GM12878 (cell line): ENCODE measurements at regions of chr7 and their contacts with region 1.

Region 1: DNA sequence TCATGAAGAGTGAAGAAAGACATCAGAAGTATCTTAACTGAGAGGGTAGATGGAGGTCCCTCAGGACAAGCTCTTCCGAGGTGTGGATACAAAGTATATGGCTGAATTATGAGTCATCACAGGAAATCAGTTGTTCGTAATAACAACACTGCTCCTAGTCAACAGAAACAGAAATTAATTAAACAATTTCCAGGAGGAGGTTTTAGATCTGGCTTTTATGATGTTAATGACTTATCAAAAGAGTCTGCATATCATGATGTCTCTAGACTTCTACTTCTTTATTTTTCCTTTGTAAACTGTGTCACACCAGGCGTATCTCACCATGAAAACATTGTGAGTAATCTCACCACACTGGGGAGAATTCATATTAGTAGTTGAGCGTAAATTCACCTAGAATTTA is 31.2 kb downstream of the OSBPL3 start:
- DNase-seq: no peak
- ATAC-seq: peak; percentile 47
- H3K4me3 ChIP-seq: no peak overlapping the region
- H3K27ac ChIP-seq: peak overlapping the region; percentile 7; the same call in 1 of the 2 replicates
- H3K4me1 ChIP-seq: peaks cover 12% of the 10 kb centered on the region; the same call in 1 of the 2 replicates
- H3K27me3 ChIP-seq: no peaks in the 10 kb centered on the region
- CTCF ChIP-seq: no peak
- EP300 ChIP-seq: no peak
- POLR2A ChIP-seq: no peak
- RAD21 ChIP-seq: no peak

Region 2: GRCh38 chr7:24896031-24896501 is 52.7 kb before region 1 on chr7:
- CTCF ChIA-PET with region 1: no interaction called
- POLR2A ChIA-PET with region 1: interaction called, 3 read pairs
- RAD21 ChIA-PET with region 1: no interaction called
- SMC1A ChIA-PET with region 1: interaction called, 12 read pairs
- in situ Hi-C with region 1: no loop called
- intact Hi-C with region 1: no loop called
- DNase-seq: peak; percentile 52
- ATAC-seq: peak; percentile 70
- H3K4me3 ChIP-seq: no peak overlapping the region
- H3K27ac ChIP-seq: peak overlapping the region; percentile 75
- H3K4me1 ChIP-seq: peaks cover 57% of the 10 kb centered on the region
- H3K27me3 ChIP-seq: no peaks in the 10 kb centered on the region
- CTCF ChIP-seq: peak in 1 of 3 experiments; percentile 45; a peak in 2 of 6 replicates
- EP300 ChIP-seq: peak; percentile 55 to 79; a peak in 3 of 4 replicates
- POLR2A ChIP-seq: no peak
- RAD21 ChIP-seq: peak; percentile 40; the same call in 1 of the 2 replicates

Region 3: DNA sequence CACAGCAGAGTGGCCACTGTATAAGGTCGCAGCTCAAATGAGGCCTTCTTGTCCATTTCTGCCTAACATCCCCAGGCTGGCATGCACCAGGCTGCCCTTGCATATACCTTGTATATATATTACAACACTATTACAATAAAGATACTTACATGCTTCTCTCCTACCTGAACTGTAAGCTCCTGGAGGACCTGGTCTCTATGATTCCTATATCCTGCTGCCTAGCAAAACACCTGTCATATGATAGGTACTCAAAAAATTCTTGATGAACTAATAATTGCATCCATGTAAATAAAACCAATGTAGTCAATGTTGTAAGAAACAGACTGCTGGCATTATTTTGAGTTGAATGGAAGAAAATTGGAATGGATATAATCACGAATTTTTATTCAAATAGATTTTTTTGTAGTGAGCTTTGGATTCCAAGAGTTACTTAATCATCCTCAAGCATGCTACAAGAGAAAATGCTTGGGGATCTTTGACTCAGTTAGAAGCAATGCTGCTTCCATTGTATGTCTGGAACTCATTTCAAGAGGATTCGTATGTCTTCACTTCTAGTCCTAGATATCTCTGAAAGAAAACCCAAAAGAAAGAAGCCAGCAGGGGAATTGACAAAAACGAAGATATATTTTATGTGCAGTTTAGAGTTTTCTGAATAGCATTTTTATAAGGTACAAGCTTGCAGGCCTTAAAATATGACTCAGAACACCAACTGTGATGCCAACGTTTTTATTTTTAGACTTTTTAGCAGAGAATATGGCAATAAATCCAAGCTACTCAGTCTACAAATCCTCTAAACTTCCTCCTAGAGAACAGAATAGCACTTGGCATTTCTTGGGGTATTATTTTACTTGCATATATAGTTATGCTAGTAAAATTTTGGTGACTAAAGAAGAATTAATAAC is 21.9 kb before region 1 on chr7:
- CTCF ChIA-PET with region 1: interaction called, 4 read pairs
- POLR2A ChIA-PET with region 1: interaction called, 5 read pairs
- RAD21 ChIA-PET with region 1: interaction called, 5 read pairs
- SMC1A ChIA-PET with region 1: interaction called, 26 read pairs
- in situ Hi-C with region 1: no loop called
- intact Hi-C with region 1: no loop called
- DNase-seq: no peak
- ATAC-seq: no peak
- H3K4me3 ChIP-seq: no peak overlapping the region
- H3K27ac ChIP-seq: no peak overlapping the region
- H3K4me1 ChIP-seq: peaks cover 4% of the 10 kb centered on the region
- H3K27me3 ChIP-seq: no peaks in the 10 kb centered on the region
- CTCF ChIP-seq: no peak
- EP300 ChIP-seq: no peak
- POLR2A ChIP-seq: no peak
- RAD21 ChIP-seq: no peak

Region 4: GRCh38 chr7:24936121-24936824 is 12.5 kb before region 1 on chr7:
- CTCF ChIA-PET with region 1: interaction called, 7 read pairs
- POLR2A ChIA-PET with region 1: interaction called, 7 read pairs
- RAD21 ChIA-PET with region 1: interaction called, 4 read pairs
- SMC1A ChIA-PET with region 1: interaction called, 31 read pairs
- in situ Hi-C with region 1: no loop called
- intact Hi-C with region 1: no loop called
- DNase-seq: peak; percentile 34
- ATAC-seq: peak; percentile 76
- H3K4me3 ChIP-seq: peak overlapping the region; percentile 52; the same call in 1 of the 2 replicates
- H3K27ac ChIP-seq: peak overlapping the region; percentile 35
- H3K4me1 ChIP-seq: peaks cover 40% of the 10 kb centered on the region
- H3K27me3 ChIP-seq: no peaks in the 10 kb centered on the region
- CTCF ChIP-seq: no peak
- EP300 ChIP-seq: no peak
- POLR2A ChIP-seq: no peak
- RAD21 ChIP-seq: no peak

Region 5: DNA sequence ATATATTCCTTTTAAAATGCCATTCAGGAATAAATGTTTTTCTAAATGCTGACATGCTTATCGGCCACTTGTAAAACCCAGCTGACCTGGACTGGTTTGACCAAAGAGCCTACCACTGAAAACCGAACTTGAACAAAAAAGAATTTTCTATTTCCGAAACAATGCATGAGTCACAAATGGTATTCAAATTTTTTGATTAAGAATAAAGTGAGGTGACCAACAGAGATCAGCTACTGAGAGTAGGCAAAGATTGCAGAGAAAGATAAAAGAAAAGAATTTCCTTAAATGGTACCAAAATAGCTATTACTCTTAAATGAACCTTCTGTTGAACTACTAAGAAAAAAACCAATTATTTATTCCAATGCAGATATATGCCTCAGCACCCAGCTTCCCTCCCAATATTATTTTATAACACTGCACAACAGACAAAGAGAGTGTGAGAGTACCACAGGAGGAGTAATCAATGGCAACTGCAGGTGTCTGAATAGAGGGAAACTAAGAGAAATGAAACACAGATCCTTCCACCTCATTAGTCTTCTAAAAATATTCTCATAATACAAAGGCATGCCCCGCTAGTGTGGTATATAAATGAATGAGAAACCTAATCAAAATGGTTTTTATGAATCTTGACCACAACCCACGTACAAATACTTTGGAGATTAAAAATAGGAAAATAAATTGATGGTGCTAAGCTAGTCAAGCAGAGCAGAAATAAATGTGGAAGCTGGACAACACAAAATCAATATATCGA is 11.2 kb after region 1 on chr7:
- CTCF ChIA-PET with region 1: interaction called, 9 read pairs
- POLR2A ChIA-PET with region 1: interaction called, 13 read pairs
- RAD21 ChIA-PET with region 1: interaction called, 17 read pairs
- SMC1A ChIA-PET with region 1: interaction called, 42 read pairs
- in situ Hi-C with region 1: no loop called
- intact Hi-C with region 1: no loop called
- DNase-seq: no peak
- ATAC-seq: no peak
- H3K4me3 ChIP-seq: no peak overlapping the region
- H3K27ac ChIP-seq: no peak overlapping the region
- H3K4me1 ChIP-seq: peaks cover 18% of the 10 kb centered on the region
- H3K27me3 ChIP-seq: no peaks in the 10 kb centered on the region
- CTCF ChIP-seq: no peak
- EP300 ChIP-seq: no peak
- POLR2A ChIP-seq: no peak
- RAD21 ChIP-seq: no peak